Body of pancreas (tissue), 4 donors: ENCODE measurements at regions of chr11 and their contacts with region 1.

Region 1: GRCh38 chr11:18731949-18732821 is 6.2 kb upstream of the IGSF22 start:
- DNase-seq: peak; percentile 51 to 69 (median 60)
- ATAC-seq: peak; percentile 73
- H3K4me3 ChIP-seq: no peak overlapping the region
- H3K27ac ChIP-seq: no peak overlapping the region
- H3K4me1 ChIP-seq: peaks cover 6% of the 10 kb centered on the region
- H3K27me3 ChIP-seq: no peaks in the 10 kb centered on the region
- CTCF ChIP-seq: peak; percentile 64 to 98 (median 81)
- POLR2A ChIP-seq: no peak

Region 2: DNA sequence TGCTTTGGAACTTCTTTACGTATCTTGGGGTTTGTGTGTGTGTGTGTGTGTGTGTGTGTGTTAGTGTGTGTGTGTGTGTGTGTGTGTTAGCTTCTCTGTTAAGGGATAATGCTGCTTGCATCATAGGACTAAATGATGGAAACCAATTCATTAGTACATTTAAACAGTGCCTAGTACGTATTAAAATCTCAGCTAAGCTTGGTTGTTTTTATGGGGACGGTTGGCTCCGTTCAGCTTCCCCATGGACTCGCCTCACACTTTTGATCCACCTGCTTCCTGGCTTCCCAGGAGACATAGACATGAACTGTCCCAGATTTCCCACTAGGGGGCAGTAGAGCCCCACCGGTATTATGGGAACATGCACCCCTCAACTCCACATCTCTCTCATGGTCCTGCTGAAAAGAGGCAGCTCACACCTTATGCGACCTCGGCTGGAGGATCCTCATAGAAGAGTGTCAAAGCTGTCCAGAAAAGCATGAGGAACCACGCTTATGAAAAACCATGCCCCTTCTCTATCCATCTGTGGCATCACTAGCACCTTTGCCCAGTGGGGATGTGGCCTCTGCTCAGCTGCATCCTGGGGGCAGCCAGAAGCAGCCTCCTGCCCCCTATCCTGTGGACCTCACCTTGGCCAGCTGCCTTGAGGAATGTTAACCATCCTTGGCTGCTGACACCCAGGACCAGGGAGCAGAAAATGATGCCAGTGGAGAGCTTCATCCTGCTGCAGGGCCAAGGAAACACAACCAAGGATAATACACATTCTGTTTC is 616.6 kb before region 1 on chr11:
- intact Hi-C with region 1: loop called (anchors 10 kb)
- DNase-seq: peak; percentile 57 to 73 (median 70)
- ATAC-seq: peak; percentile 87
- H3K4me3 ChIP-seq: no peak overlapping the region
- H3K27ac ChIP-seq: no peak overlapping the region
- H3K4me1 ChIP-seq: no peaks in the 10 kb centered on the region
- H3K27me3 ChIP-seq: peaks cover 0 to 11% of the 10 kb centered on the region in 2 donors
- CTCF ChIP-seq: peak; percentile 72 to 87 (median 84)
- POLR2A ChIP-seq: no peak

Region 3: DNA sequence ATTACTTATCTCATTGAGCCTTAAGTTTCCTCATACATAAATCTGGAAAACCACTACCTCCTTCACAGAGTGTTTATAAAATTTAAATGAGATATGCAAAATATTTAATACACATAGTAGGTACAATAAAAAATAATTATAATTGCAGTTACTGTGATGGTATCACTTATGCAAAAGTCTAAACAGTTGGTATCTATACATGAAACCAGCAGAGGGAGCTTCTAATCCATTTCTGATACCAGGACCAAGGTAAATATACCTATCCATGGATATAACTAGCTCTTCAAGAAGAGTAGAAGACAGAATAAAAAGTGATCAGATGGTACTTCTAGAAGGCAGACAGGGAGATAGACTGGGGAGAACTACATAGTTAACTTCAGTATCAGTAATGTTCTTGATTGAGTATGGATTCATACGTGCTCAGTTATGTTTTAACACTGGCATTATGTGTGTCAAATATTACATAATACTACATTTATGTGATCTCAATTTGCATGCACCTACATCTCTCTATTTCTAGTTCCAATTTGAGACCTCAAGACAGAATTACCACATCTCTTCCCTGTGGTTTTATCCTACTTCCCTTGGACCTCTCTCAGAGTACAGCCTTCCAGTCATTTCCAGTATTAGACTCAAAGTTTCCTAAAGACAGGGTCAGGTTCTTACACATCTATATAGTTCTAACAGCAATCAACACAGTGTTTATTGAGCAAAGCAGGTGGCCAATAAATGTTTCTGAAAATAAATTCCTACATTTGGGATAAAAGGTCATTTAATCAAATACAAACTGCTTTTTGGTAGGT is 191.8 kb before region 1 on chr11:
- intact Hi-C with region 1: loop called (anchors 10 kb)
- DNase-seq: no peak
- ATAC-seq: no peak
- H3K4me3 ChIP-seq: no peak overlapping the region
- H3K27ac ChIP-seq: no peak overlapping the region
- H3K4me1 ChIP-seq: no peaks in the 10 kb centered on the region
- H3K27me3 ChIP-seq: no peaks in the 10 kb centered on the region
- CTCF ChIP-seq: peak in 6 of 7 experiments; percentile 23 to 56 (median 40)
- POLR2A ChIP-seq: no peak

Region 4: GRCh38 chr11:18578975-18579598 is 153.1 kb before region 1 on chr11:
- intact Hi-C with region 1: no loop called
- DNase-seq: no peak
- ATAC-seq: no peak
- H3K4me3 ChIP-seq: no peak overlapping the region
- H3K27ac ChIP-seq: no peak overlapping the region
- H3K4me1 ChIP-seq: no peaks in the 10 kb centered on the region
- H3K27me3 ChIP-seq: no peaks in the 10 kb centered on the region
- CTCF ChIP-seq: no peak
- POLR2A ChIP-seq: no peak